MCF 10A (cell line): ENCODE measurements at regions of chr12 and their contacts with region 1.

Region 1: GRCh38 chr12:32755654-32756475 is at the start of gene YARS2:
- DNase-seq: peak; percentile 97
- H3K4me3 Mint-ChIP-seq: peak within 1 kb of the TSS; percentile 86
- H3K27ac Mint-ChIP-seq: peak within 1 kb of the TSS; percentile 90
- H3K4me1 Mint-ChIP-seq: peaks cover 13% of the 10 kb centered on the region
- H3K27me3 Mint-ChIP-seq: no peaks in the 10 kb centered on the region
- CTCF ChIP-seq: peak; percentile 80
- total RNA-seq, gene YARS2: 27.2 and 30.1 TPM in 2 replicates

Region 2: DNA sequence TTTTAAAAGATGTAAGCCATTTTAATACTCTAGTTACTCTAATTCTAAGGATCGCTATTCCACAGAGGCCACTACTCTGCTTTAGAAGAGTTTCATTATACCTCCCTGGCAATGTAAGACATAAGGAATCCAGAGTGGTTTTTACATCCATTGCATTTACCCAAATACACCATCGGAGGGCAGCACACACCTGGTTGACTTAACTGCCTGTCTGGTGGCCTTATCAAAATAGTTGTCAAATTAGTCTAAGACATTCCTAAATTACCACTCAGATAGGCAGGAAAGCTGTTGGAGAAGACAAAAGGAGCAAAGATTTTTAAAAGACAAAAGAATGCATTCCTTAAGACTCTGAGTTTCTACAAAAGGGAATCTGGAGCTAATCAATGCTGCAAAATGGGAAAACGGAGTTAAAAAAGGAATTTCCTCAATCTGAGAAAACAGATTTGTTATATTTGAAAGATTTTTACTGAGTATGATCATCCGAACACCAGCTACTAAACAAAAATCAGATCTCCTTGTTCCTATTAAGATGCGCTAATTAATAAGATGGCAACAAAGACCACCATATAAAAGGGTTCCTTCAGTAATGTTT is 390.3 kb before region 1 on chr12:
- CTCF ChIA-PET with region 1: interaction called, 6 read pairs
- POLR2A ChIA-PET with region 1: interaction called, 7 read pairs
- intact Hi-C with region 1: loop called (anchors 2 kb)
- DNase-seq: peak; percentile 81
- H3K4me3 Mint-ChIP-seq: no peak overlapping the region
- H3K27ac Mint-ChIP-seq: no peak overlapping the region
- H3K4me1 Mint-ChIP-seq: peaks cover 5% of the 10 kb centered on the region
- H3K27me3 Mint-ChIP-seq: no peaks in the 10 kb centered on the region
- CTCF ChIP-seq: peak; percentile 85

Region 3: DNA sequence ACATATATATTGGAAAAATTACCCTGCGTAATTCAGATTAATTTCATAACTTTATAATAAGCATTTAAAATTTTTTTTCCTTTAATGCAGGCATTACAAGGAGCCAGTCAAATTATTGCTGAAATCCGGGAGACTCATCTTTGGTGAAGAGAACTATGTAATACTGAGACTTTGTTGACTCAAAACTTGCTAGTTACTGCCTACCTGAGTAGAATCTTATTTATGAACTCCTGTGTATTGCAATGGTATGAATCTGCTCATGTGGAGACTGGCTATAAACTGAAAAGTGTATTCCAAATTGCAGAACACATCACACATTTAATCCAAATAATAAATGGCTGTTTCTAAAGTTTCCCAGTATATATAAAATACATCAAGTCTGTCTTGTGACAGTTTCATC is 12.6 kb before region 1 on chr12:
- CTCF ChIA-PET with region 1: interaction called, 21 read pairs
- POLR2A ChIA-PET with region 1: interaction called, 23 read pairs
- intact Hi-C with region 1: no loop called
- DNase-seq: no peak
- H3K4me3 Mint-ChIP-seq: no peak overlapping the region
- H3K27ac Mint-ChIP-seq: no peak overlapping the region
- H3K4me1 Mint-ChIP-seq: no peaks in the 10 kb centered on the region
- H3K27me3 Mint-ChIP-seq: no peaks in the 10 kb centered on the region
- CTCF ChIP-seq: no peak

Region 4: GRCh38 chr12:32843528-32844095 is 87.7 kb after region 1 on chr12:
- CTCF ChIA-PET with region 1: interaction called, 13 read pairs
- POLR2A ChIA-PET with region 1: interaction called, 6 read pairs
- intact Hi-C with region 1: no loop called
- DNase-seq: peak; percentile 14
- H3K4me3 Mint-ChIP-seq: no peak overlapping the region
- H3K27ac Mint-ChIP-seq: peak overlapping the region; percentile 28
- H3K4me1 Mint-ChIP-seq: peaks cover 13% of the 10 kb centered on the region
- H3K27me3 Mint-ChIP-seq: no peaks in the 10 kb centered on the region
- CTCF ChIP-seq: no peak

Region 5: DNA sequence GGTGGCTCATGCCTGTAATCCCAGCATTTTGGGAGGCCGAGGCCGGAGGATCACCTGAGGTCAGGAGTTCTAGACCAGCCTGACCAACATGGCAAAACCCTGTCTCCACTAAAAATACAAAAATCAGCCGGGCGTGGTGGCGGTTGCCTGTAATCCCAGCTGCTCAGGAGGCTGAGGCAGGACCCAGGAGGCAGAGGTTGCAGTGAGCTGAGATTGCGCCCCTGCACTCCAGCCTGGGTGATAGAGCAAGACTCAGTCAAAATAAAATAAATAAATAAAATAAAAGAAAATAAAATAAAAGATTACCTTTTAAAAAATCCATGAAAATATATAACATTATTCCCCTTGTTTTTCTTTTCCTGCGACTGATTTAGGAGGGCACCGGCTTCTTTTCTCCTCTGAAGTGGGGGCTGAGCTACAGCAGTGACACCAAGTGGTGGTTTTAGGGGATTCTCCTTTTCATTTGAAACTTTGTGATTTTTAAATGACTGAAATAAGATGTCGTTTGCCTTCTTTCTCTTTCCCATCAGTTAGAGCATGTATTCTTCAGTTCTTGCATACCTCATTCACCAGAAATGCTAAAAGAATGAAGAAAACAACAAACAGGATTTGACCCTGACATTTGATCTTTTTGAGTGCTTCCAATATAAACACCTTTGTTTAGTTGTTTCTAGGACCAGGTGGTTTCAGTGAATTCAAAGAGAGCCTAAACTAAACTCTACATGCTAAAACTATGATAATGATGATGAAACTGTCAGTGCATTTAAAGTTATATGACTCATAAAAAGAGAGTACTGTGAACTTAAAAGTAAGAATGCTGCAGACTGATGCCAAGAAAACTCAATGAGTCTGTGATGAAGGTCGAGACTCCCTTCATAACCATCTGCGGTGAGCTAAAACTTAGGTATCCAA is 163.3 kb after region 1 on chr12:
- CTCF ChIA-PET with region 1: interaction called, 60 read pairs
- POLR2A ChIA-PET with region 1: interaction called, 27 read pairs
- intact Hi-C with region 1: loop called (anchors 1 kb)
- DNase-seq: peak; percentile 76
- H3K4me3 Mint-ChIP-seq: peak overlapping the region; percentile 52
- H3K27ac Mint-ChIP-seq: peak overlapping the region; percentile 99
- H3K4me1 Mint-ChIP-seq: peaks cover 54% of the 10 kb centered on the region
- H3K27me3 Mint-ChIP-seq: no peaks in the 10 kb centered on the region
- CTCF ChIP-seq: peak; percentile 65

Region 6: GRCh38 chr12:34022079-34022830 is 1266.4 kb after region 1 on chr12 and contains the start of gene ALG10:
- CTCF ChIA-PET with region 1: interaction called, 51 read pairs
- POLR2A ChIA-PET with region 1: interaction called, 35 read pairs
- intact Hi-C with region 1: loop called (anchors 1 kb)
- DNase-seq: peak; percentile 99
- H3K4me3 Mint-ChIP-seq: peak within 1 kb of the TSS; percentile 95
- H3K27ac Mint-ChIP-seq: peak within 1 kb of the TSS; percentile 94
- H3K4me1 Mint-ChIP-seq: no peaks in the 10 kb centered on the region
- H3K27me3 Mint-ChIP-seq: peaks cover 11% of the 10 kb centered on the region
- CTCF ChIP-seq: peak; percentile 51
- total RNA-seq, gene ALG10: 7.6 and 7.8 TPM in 2 replicates